Activated CD4-positive, alpha-beta T cell treated with anti-CD3 and anti-CD28 coated beads for 36 hours (primary cell): ENCODE measurements at regions of chr11 and their contacts with region 1.

Region 1: DNA sequence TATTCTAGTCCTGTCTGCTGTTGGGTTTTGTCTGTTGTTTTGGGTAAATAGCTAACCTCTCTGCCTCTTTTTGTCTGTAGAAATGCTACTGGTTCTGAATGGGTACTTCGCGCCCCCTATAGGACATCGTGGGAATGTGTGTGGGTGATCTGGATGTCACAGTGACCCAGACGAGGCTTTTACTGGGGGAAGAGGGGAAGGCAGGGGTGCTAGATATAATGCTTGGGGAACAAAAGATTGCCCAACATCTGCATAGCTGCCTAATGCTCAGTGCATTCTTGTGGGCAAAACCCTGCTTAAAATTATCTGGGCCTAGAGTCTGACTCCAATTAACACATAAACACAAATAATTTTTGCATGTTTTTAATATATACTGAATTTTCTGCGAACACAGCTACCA is 57.7 kb downstream of the BMAL1 start:
- DNase-seq: peak; percentile 84
- ATAC-seq: peak; percentile 16
- H3K4me3 Mint-ChIP-seq: no peak overlapping the region
- H3K27ac Mint-ChIP-seq: no peak overlapping the region
- H3K4me1 Mint-ChIP-seq: peaks cover 78% of the 10 kb centered on the region
- H3K27me3 Mint-ChIP-seq: no peaks in the 10 kb centered on the region

Region 2: GRCh38 chr11:13210424-13210823 is 124.9 kb before region 1 on chr11:
- CTCF ChIA-PET with region 1: interaction called, 31 read pairs
- POLR2A ChIA-PET with region 1: no interaction called
- intact Hi-C with region 1: loop called (anchors 1 kb)
- DNase-seq: peak; percentile 48
- ATAC-seq: no peak
- H3K4me3 Mint-ChIP-seq: no peak overlapping the region
- H3K27ac Mint-ChIP-seq: no peak overlapping the region
- H3K4me1 Mint-ChIP-seq: peaks cover 38% of the 10 kb centered on the region
- H3K27me3 Mint-ChIP-seq: peaks cover 2% of the 10 kb centered on the region

Region 3: DNA sequence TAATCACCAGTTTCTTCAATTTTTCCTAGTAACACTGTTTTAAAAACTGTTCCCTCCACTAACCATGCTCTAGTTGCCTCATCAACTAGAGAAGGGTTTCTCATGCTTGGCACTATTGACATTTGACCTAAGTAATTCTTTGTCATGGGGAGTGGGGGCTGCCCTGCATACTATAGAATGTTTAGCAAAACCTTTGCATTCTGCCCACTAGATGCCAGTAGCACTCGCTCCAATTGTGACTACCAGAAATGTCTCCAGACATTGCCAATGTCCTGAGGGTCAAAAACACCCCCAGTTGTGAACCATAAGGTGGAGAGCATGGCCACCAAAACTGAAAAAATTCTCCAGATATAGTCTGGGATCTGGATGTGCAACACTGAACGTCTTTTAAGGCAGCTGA is 85.3 kb before region 1 on chr11:
- CTCF ChIA-PET with region 1: interaction called, 17 read pairs
- POLR2A ChIA-PET with region 1: no interaction called
- intact Hi-C with region 1: no loop called
- DNase-seq: peak; percentile 14
- ATAC-seq: no peak
- H3K4me3 Mint-ChIP-seq: no peak overlapping the region
- H3K27ac Mint-ChIP-seq: no peak overlapping the region
- H3K4me1 Mint-ChIP-seq: no peaks in the 10 kb centered on the region
- H3K27me3 Mint-ChIP-seq: peaks cover 8% of the 10 kb centered on the region

Region 4: GRCh38 chr11:13276832-13277767 is 58.2 kb before region 1 on chr11:
- CTCF ChIA-PET with region 1: interaction called, 28 read pairs
- POLR2A ChIA-PET with region 1: interaction called, 4 read pairs
- intact Hi-C with region 1: loop called (anchors 1 to 2 kb)
- DNase-seq: peak; percentile 98
- ATAC-seq: peak; percentile 93
- H3K4me3 Mint-ChIP-seq: peak overlapping the region; percentile 87
- H3K27ac Mint-ChIP-seq: peak overlapping the region; percentile 84
- H3K4me1 Mint-ChIP-seq: peaks cover 43% of the 10 kb centered on the region
- H3K27me3 Mint-ChIP-seq: peaks cover 6% of the 10 kb centered on the region

Region 5: GRCh38 chr11:13302420-13302958 is 32.8 kb before region 1 on chr11:
- CTCF ChIA-PET with region 1: interaction called, 14 read pairs
- POLR2A ChIA-PET with region 1: no interaction called
- intact Hi-C with region 1: no loop called
- DNase-seq: no peak
- ATAC-seq: no peak
- H3K4me3 Mint-ChIP-seq: no peak overlapping the region
- H3K27ac Mint-ChIP-seq: no peak overlapping the region
- H3K4me1 Mint-ChIP-seq: peaks cover 37% of the 10 kb centered on the region
- H3K27me3 Mint-ChIP-seq: no peaks in the 10 kb centered on the region